Right cardiac atrium (tissue), 5 donors: ENCODE measurements at regions of chr13 and their contacts with region 1.

Region 1: GRCh38 chr13:44191504-44192171 is 182.0 kb upstream of the SERP2 start:
- DNase-seq: peak in 2 of 3 donors; percentile 29 to 69
- ATAC-seq: peak; percentile 93 to 96
- H3K4me3 ChIP-seq: no peak overlapping the region
- H3K27ac ChIP-seq: no peak overlapping the region
- H3K4me1 ChIP-seq: no peaks in the 10 kb centered on the region
- H3K27me3 ChIP-seq: no peaks in the 10 kb centered on the region

Region 2: DNA sequence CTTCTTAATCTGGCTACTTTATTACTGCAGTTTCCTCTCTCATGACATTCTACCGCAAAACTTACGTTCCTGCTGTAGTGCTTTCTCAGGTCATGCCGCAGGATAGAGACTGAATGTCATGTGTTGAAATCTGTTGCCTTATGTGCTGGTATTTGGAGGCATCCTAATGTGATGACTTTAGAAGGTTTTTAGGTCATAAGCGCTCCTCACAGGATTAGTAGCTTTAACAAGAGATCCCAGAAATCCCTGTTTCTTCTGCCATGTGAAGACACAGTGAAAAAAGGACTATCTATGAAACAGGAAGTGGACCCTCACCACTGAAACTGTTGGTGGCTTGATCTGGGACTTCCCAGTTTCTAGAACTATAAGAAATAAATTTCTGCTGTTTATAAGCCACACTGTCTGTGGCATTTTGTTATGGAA is 102.6 kb before region 1 on chr13:
- intact Hi-C with region 1: no loop called
- DNase-seq: no peak
- ATAC-seq: no peak
- H3K4me3 ChIP-seq: no peak overlapping the region
- H3K27ac ChIP-seq: no peak overlapping the region
- H3K4me1 ChIP-seq: no peaks in the 10 kb centered on the region
- H3K27me3 ChIP-seq: no peaks in the 10 kb centered on the region

Region 3: DNA sequence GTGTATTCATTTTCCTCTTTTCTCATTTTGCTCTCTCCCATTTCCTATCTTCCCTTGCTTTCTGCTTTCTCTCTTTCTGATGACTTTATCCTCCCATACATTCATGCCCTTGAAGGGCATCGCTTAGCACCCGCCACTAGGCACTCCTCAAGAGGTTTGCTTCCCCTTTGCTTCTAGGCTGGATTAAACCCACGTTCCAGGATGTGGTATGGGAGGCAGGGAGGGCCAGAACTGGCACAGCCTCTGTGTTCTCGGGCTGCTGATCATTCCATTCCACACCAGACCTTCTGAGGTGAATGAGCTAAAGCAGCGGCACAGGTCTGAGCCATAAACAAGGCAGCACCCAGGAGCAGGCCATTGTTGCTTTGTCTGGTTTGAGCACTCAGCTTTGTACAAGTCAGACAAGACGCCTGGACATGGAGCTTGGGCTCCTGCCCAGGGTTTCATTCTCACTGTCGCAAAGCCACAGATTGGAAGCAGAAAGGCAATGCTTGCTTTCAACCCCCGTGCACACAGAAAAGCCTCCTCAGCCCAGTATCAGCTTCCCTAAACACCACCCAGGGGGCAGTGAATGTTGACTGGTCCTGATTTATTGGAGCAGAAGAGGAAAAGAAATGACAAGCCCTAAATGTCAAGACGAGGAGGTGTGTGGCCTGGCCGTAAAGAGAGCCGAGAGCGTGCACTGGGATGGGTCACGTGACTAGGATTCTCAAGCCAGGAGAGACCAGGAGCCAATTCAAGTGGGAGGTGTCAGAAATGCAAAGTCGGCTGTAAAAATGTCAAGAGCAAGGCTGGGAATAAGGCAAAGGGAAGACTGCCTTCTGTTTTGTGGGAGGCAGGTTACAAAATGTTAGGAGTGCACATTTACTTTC is 36.0 kb before region 1 on chr13:
- intact Hi-C with region 1: loop called in 1 of 4 experiments (anchors 5 kb)
- DNase-seq: peak; percentile 64 to 87 (median 79)
- ATAC-seq: peak; percentile 64 to 77
- H3K4me3 ChIP-seq: no peak overlapping the region
- H3K27ac ChIP-seq: peak overlapping the region; percentile 30
- H3K4me1 ChIP-seq: peaks cover 5% of the 10 kb centered on the region
- H3K27me3 ChIP-seq: no peaks in the 10 kb centered on the region

Region 4: GRCh38 chr13:44249431-44249836 is 57.8 kb after region 1 on chr13:
- intact Hi-C with region 1: no loop called
- DNase-seq: peak; percentile 52 to 94 (median 85)
- ATAC-seq: peak; percentile 56 to 94
- H3K4me3 ChIP-seq: no peak overlapping the region
- H3K27ac ChIP-seq: peak overlapping the region; percentile 79
- H3K4me1 ChIP-seq: peaks cover 6% of the 10 kb centered on the region
- H3K27me3 ChIP-seq: no peaks in the 10 kb centered on the region